IMR-90 (cell line): ENCODE measurements at regions of chr7 and their contacts with region 1.

Region 1: GRCh38 chr7:23181684-23182553 is at the start of gene NUP42:
- DNase-seq: peak; percentile 100
- ATAC-seq: peak; percentile 96
- H3K4me3 ChIP-seq: peak within 1 kb of the TSS; percentile 82
- H3K27ac ChIP-seq: peak within 1 kb of the TSS; percentile 85
- H3K4me1 ChIP-seq: no peaks in the 10 kb centered on the region
- H3K27me3 ChIP-seq: no peaks in the 10 kb centered on the region
- CTCF ChIP-seq: no peak
- POLR2A ChIP-seq: peak; percentile 72
- RAD21 ChIP-seq: no peak
- total RNA-seq, gene NUP42: 17.2 and 22.6 TPM in 2 replicates

Region 2: DNA sequence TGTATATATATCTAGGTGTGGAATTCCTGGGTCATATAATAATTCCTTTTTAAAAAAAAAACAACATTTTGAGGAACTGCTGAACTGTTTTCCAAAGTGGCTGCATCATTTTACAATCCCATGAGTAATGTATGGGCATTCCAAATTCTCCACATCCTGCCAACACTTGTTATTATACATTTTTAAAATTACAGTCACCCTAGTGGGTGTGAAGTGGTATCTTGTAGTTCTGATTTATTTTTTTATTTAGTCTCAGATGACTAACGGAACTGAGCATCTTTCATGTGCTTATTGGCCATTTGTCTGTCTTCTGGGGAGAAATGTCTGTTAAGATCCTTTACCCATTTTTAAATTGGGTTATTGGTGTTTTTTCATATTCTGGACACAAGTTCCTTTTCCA is 88.4 kb before region 1 on chr7:
- CTCF ChIA-PET with region 1: no interaction called
- POLR2A ChIA-PET with region 1: interaction called, 10 read pairs
- dilution Hi-C with region 1: no loop called
- in situ Hi-C with region 1: no loop called
- intact Hi-C with region 1: no loop called
- DNase-seq: peak; percentile 65
- ATAC-seq: peak; percentile 49; the same call in 1 of the 2 replicates
- H3K4me3 ChIP-seq: no peak overlapping the region
- H3K27ac ChIP-seq: no peak overlapping the region
- H3K4me1 ChIP-seq: no peaks in the 10 kb centered on the region
- H3K27me3 ChIP-seq: no peaks in the 10 kb centered on the region
- CTCF ChIP-seq: no peak
- POLR2A ChIP-seq: no peak
- RAD21 ChIP-seq: no peak

Region 3: DNA sequence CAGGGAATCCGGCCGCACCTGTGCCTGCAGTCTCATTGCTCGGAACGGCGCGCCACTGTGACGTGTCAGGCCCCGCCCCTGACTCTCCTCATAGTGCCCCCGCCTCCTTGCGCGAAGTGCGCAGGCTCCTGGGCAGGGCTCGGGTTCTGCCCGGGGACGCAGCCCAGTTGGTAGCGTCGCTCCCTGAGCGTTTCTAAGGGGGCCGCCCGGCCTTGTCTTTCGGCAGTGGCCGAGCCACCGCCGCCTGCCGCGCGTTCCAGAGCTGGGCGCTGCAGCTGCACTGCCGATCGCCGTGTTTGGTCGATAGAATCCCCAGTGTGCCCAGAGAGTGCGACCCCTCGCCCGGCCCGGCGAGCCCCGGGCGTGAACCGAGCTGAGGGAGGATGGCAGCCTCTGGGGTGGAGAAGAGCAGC is 76.3 kb before region 1 on chr7 and contains the start of gene KLHL7:
- CTCF ChIA-PET with region 1: interaction called, 3 read pairs
- POLR2A ChIA-PET with region 1: interaction called, 3 read pairs
- dilution Hi-C with region 1: no loop called
- in situ Hi-C with region 1: no loop called
- intact Hi-C with region 1: loop called (anchors 2 kb)
- DNase-seq: peak; percentile 87
- ATAC-seq: peak; percentile 98
- H3K4me3 ChIP-seq: peak within 1 kb of the TSS; percentile 79
- H3K27ac ChIP-seq: peak within 1 kb of the TSS; percentile 73
- H3K4me1 ChIP-seq: no peaks in the 10 kb centered on the region; the same call in none of the 2 replicates
- H3K27me3 ChIP-seq: no peaks in the 10 kb centered on the region
- CTCF ChIP-seq: no peak
- POLR2A ChIP-seq: peak; percentile 83
- RAD21 ChIP-seq: no peak
- total RNA-seq, gene KLHL7: 29.2 and 44.4 TPM in 2 replicates

Region 4: GRCh38 chr7:23205909-23206767 is 24.2 kb after region 1 on chr7:
- CTCF ChIA-PET with region 1: no interaction called
- POLR2A ChIA-PET with region 1: interaction called, 10 read pairs
- dilution Hi-C with region 1: no loop called
- in situ Hi-C with region 1: no loop called
- intact Hi-C with region 1: no loop called
- DNase-seq: no peak
- ATAC-seq: no peak
- H3K4me3 ChIP-seq: no peak overlapping the region
- H3K27ac ChIP-seq: no peak overlapping the region
- H3K4me1 ChIP-seq: no peaks in the 10 kb centered on the region
- H3K27me3 ChIP-seq: peaks cover 2% of the 10 kb centered on the region; the same call in 1 of the 2 replicates
- CTCF ChIP-seq: no peak
- POLR2A ChIP-seq: no peak
- RAD21 ChIP-seq: no peak

Region 5: DNA sequence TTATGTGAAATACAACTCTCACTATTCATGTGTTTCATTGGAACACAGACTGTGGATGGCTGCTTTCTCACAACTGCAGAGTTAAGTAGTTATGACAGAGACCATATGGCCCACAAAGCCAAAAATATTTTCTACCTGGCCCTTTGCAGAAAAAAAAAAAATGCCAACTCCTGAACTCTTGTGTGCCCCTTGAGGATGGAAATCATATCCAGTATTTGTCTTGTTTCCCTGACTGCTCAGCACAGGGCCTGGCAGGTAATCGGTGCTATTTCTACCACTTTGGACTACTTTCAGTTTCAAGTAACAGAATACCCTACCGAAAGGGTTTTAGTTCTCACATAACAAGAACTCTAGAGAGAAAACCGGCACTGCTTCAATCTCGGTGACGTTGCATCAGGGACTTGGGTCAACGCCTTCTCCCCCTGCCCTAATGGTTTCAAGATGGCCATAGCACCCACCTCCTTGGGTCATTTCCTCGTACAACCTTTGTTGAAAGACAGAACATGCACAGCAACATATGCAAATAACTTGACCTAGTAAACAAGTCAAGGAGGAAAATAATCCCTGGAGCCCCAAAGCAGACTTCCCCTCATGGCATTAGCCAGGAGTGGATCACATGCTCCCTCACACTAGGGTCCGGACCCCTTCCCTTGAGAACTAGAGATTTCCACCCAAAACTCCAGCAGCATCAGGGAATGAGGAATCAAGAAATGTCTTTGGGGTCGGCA is 52.8 kb after region 1 on chr7:
- CTCF ChIA-PET with region 1: no interaction called
- POLR2A ChIA-PET with region 1: no interaction called
- dilution Hi-C with region 1: no loop called
- in situ Hi-C with region 1: no loop called
- intact Hi-C with region 1: no loop called
- DNase-seq: no peak
- ATAC-seq: no peak
- H3K4me3 ChIP-seq: no peak overlapping the region
- H3K27ac ChIP-seq: no peak overlapping the region
- H3K4me1 ChIP-seq: no peaks in the 10 kb centered on the region
- H3K27me3 ChIP-seq: peaks cover 5% of the 10 kb centered on the region
- CTCF ChIP-seq: no peak
- POLR2A ChIP-seq: no peak
- RAD21 ChIP-seq: no peak

Region 6: DNA sequence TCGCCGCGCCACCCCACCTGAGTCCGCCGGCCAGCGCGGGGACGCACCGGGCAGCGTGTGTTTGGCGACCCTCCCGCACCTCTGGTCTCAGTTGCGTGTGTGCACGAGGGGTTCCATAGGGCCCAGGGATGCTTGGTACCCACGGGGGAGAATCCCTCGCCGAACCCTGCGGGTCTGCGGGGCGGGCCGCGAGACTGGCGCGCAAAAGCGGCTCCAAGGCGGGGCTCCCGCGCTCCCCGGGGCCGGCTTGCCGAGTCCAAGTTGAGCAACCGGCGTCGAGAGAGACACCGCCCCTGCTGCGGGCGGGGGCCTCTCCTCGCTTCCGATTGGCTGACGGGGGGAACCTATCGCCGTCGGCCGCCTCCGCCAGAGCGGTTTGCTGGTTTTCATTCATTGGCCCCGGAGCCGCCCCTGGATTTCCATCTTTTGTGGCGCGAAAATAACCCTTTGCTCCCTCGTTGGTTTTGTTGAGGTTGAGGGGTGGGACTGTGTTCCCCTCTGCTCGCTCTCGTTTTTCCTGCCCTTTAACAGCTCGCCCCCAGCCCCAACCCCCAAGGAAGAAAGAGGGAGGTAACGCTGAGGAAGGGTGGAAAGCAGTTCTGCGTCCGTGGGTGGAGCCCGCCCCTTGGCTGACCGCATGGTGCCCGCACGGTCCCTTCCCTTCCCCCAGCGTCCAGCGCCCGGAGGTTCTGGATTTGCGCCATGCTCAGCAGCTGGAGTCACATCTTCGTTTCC is 292.3 kb after region 1 on chr7:
- CTCF ChIA-PET with region 1: no interaction called
- POLR2A ChIA-PET with region 1: no interaction called
- dilution Hi-C with region 1: no loop called
- in situ Hi-C with region 1: no loop called
- intact Hi-C with region 1: loop called (anchors 10 kb)
- DNase-seq: peak; percentile 95
- ATAC-seq: peak; percentile 66
- H3K4me3 ChIP-seq: peak overlapping the region; percentile 83
- H3K27ac ChIP-seq: peak overlapping the region; percentile 81
- H3K4me1 ChIP-seq: peaks cover 2% of the 10 kb centered on the region; the same call in 1 of the 2 replicates
- H3K27me3 ChIP-seq: no peaks in the 10 kb centered on the region
- CTCF ChIP-seq: no peak
- POLR2A ChIP-seq: peak; percentile 54
- RAD21 ChIP-seq: no peak

Region 7: DNA sequence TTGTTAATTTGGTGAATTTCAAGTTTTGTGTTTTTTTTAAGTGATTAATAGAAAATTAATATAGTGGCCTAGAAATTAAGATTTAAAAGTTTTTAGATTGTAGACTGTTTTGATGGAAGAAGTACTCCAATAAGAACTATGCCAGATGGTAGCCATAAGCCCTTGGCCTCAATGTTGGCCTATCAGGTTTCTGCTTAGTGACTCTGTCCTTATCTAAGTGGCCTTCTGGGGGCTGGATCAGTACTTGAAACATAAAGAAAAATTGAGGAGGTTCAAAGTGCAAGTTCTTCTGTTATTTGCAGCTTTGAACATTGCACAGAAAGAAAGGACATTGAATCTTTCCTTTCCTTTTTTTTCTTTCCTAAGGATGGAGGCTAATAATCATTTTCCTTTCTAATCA is 425.2 kb after region 1 on chr7:
- CTCF ChIA-PET with region 1: no interaction called
- POLR2A ChIA-PET with region 1: no interaction called
- dilution Hi-C with region 1: no loop called
- in situ Hi-C with region 1: no loop called
- intact Hi-C with region 1: no loop called
- DNase-seq: no peak
- ATAC-seq: no peak
- H3K4me3 ChIP-seq: no peak overlapping the region
- H3K27ac ChIP-seq: no peak overlapping the region
- H3K4me1 ChIP-seq: peaks cover 3% of the 10 kb centered on the region; the same call in 1 of the 2 replicates
- H3K27me3 ChIP-seq: no peaks in the 10 kb centered on the region
- CTCF ChIP-seq: no peak
- POLR2A ChIP-seq: no peak
- RAD21 ChIP-seq: no peak